GM12878 (cell line): ENCODE measurements at regions of chr1 and their contacts with region 1.

Region 1: GRCh38 chr1:67430352-67431155 is at the start of gene SERBP1:
- DNase-seq: peak; percentile 98
- ATAC-seq: peak; percentile 86
- H3K4me3 ChIP-seq: peak within 1 kb of the TSS; percentile 91
- H3K27ac ChIP-seq: peak within 1 kb of the TSS; percentile 96
- H3K4me1 ChIP-seq: peaks cover 15% of the 10 kb centered on the region
- H3K27me3 ChIP-seq: no peaks in the 10 kb centered on the region
- CTCF ChIP-seq: no peak
- EP300 ChIP-seq: peak in 1 of 2 experiments; percentile 50; a peak in 2 of 4 replicates
- POLR2A ChIP-seq: peak; percentile 59
- RAD21 ChIP-seq: no peak
- polyA plus RNA-seq, gene SERBP1: 76.7 to 111 TPM

Region 2: GRCh38 chr1:67408148-67408547 is 22.4 kb before region 1 on chr1:
- CTCF ChIA-PET with region 1: no interaction called
- POLR2A ChIA-PET with region 1: interaction called, 3 read pairs
- RAD21 ChIA-PET with region 1: no interaction called
- SMC1A ChIA-PET with region 1: interaction called, 12 read pairs
- in situ Hi-C with region 1: no loop called
- intact Hi-C with region 1: no loop called
- DNase-seq: no peak
- ATAC-seq: no peak
- H3K4me3 ChIP-seq: no peak overlapping the region
- H3K27ac ChIP-seq: no peak overlapping the region
- H3K4me1 ChIP-seq: no peaks in the 10 kb centered on the region
- H3K27me3 ChIP-seq: no peaks in the 10 kb centered on the region
- CTCF ChIP-seq: no peak
- EP300 ChIP-seq: no peak
- POLR2A ChIP-seq: no peak
- RAD21 ChIP-seq: no peak

Region 3: DNA sequence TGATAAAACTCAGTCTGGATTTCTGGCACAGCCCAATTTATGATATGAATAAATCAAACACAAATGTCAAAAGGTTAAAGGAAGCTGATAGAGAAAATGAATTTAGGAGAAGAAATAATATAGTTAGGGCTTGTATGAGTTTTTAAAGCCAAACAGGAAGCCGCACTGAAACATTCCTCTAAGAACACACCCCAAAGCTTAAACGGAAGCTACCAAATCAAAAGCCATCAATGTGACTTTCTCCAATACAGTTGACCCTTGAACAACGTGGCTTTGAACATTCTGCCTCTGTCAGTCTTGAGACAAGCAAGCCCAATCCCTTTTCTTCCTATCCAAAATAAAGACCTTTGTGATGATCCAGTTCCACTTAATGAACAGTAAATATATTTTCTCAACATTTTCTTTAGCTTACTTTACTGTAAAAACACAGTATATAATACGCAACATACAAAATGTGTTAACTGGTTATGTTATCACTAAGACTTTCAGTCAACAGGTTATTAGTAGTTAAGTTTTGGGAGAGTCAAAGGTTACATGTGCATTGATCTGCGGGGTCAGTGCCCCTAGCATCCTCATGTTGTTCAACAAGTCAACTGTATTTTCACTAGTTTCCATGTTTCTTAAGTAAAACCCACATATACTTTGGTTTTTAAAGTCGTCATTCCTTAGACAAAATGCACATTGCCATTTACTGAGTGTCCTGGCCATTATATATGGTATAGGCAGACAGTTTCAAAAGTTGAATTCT is 11.5 kb before region 1 on chr1:
- CTCF ChIA-PET with region 1: interaction called, 8 read pairs
- POLR2A ChIA-PET with region 1: interaction called, 10 read pairs
- RAD21 ChIA-PET with region 1: interaction called, 6 read pairs
- SMC1A ChIA-PET with region 1: interaction called, 11 read pairs
- in situ Hi-C with region 1: no loop called
- intact Hi-C with region 1: no loop called
- DNase-seq: no peak
- ATAC-seq: no peak
- H3K4me3 ChIP-seq: no peak overlapping the region
- H3K27ac ChIP-seq: no peak overlapping the region
- H3K4me1 ChIP-seq: peaks cover 8% of the 10 kb centered on the region
- H3K27me3 ChIP-seq: no peaks in the 10 kb centered on the region
- CTCF ChIP-seq: no peak
- EP300 ChIP-seq: no peak
- POLR2A ChIP-seq: no peak
- RAD21 ChIP-seq: no peak

Region 4: DNA sequence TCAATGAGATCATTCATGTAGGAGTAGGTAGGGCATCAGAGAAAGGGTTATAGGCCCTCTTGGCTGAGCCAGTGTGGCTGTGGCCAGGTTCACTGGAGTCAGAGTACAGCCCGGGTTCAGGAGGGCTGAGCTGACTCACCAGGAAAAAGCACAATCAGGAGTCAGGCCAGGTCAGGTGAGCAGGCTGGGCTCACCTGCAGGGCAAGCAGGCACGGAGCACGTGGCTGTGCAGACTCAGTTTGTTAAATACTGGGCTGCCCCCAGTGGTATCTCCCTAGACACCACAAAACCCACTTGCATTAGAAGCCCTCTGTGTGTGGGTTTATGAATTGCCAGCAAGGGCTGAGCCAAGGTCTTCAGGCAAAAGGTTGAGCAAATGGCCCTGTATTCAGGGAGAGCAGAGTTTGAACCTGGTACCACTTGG is 121.8 kb after region 1 on chr1:
- CTCF ChIA-PET with region 1: no interaction called
- POLR2A ChIA-PET with region 1: no interaction called
- RAD21 ChIA-PET with region 1: no interaction called
- SMC1A ChIA-PET with region 1: no interaction called
- in situ Hi-C with region 1: no loop called
- intact Hi-C with region 1: no loop called
- DNase-seq: no peak
- ATAC-seq: peak; percentile 71
- H3K4me3 ChIP-seq: no peak overlapping the region
- H3K27ac ChIP-seq: no peak overlapping the region
- H3K4me1 ChIP-seq: no peaks in the 10 kb centered on the region
- H3K27me3 ChIP-seq: no peaks in the 10 kb centered on the region; a peak in 1 of 4 replicates
- CTCF ChIP-seq: no peak
- EP300 ChIP-seq: no peak
- POLR2A ChIP-seq: no peak
- RAD21 ChIP-seq: no peak